Naive thymus-derived CD4-positive, alpha-beta T cell (primary cell): ENCODE measurements at regions of chr4 and their contacts with region 1.

Region 1: GRCh38 chr4:112266821-112267220 is 18.9 kb downstream of the TIFA start:
- DNase-seq: peak in 2 of 9 donors; percentile 11 to 24
- ATAC-seq: peak; percentile 45
- H3K4me3 ChIP-seq: no peak overlapping the region
- H3K4me3 Mint-ChIP-seq: no peak overlapping the region
- H3K27ac ChIP-seq: no peak overlapping the region
- H3K27ac Mint-ChIP-seq: peak overlapping the region in 1 of 9 donors; percentile 22
- H3K4me1 ChIP-seq: no peaks in the 10 kb centered on the region
- H3K4me1 Mint-ChIP-seq: peaks cover 0 to 17% (median 0%) of the 10 kb centered on the region in 7 donors
- H3K27me3 ChIP-seq: no peaks in the 10 kb centered on the region
- H3K27me3 Mint-ChIP-seq: no peaks in the 10 kb centered on the region

Region 2: GRCh38 chr4:110622841-110623717 is 1643.7 kb before region 1 on chr4 and contains the start of gene PITX2:
- CTCF ChIA-PET with region 1: no interaction called
- POLR2A ChIA-PET with region 1: no interaction called
- intact Hi-C with region 1: no loop called
- DNase-seq: no peak
- ATAC-seq: peak; percentile 44
- H3K4me3 ChIP-seq: no peak within 1 kb of the TSS
- H3K4me3 Mint-ChIP-seq: peak within 1 kb of the TSS; percentile 61 to 83 (median 72)
- H3K27ac ChIP-seq: no peak within 1 kb of the TSS
- H3K27ac Mint-ChIP-seq: peak within 1 kb of the TSS in 1 of 9 donors; percentile 85
- H3K4me1 ChIP-seq: peaks cover 0 to 12% of the 10 kb centered on the region in 2 donors
- H3K4me1 Mint-ChIP-seq: peaks cover 13 to 54% (median 39%) of the 10 kb centered on the region in 7 donors
- H3K27me3 ChIP-seq: peaks cover 14 to 48% of the 10 kb centered on the region in 2 donors
- H3K27me3 Mint-ChIP-seq: peaks cover 92 to 99% (median 97%) of the 10 kb centered on the region in 5 donors
- total RNA-seq, gene PITX2: not detected

Region 3: GRCh38 chr4:112219826-112220366 is 46.9 kb before region 1 on chr4:
- CTCF ChIA-PET with region 1: interaction called, 3 read pairs
- POLR2A ChIA-PET with region 1: no interaction called
- intact Hi-C with region 1: loop called in 1 of 2 experiments (anchors 1 kb)
- DNase-seq: no peak
- ATAC-seq: no peak
- H3K4me3 ChIP-seq: no peak overlapping the region
- H3K4me3 Mint-ChIP-seq: no peak overlapping the region
- H3K27ac ChIP-seq: no peak overlapping the region
- H3K27ac Mint-ChIP-seq: no peak overlapping the region
- H3K4me1 ChIP-seq: no peaks in the 10 kb centered on the region
- H3K4me1 Mint-ChIP-seq: peaks cover 0 to 7% (median 0%) of the 10 kb centered on the region in 7 donors
- H3K27me3 ChIP-seq: no peaks in the 10 kb centered on the region
- H3K27me3 Mint-ChIP-seq: no peaks in the 10 kb centered on the region

Region 4: GRCh38 chr4:112436955-112437354 is 170.1 kb after region 1 on chr4:
- CTCF ChIA-PET with region 1: no interaction called
- POLR2A ChIA-PET with region 1: no interaction called
- intact Hi-C with region 1: no loop called
- DNase-seq: no peak
- ATAC-seq: no peak
- H3K4me3 ChIP-seq: no peak overlapping the region
- H3K4me3 Mint-ChIP-seq: no peak overlapping the region
- H3K27ac ChIP-seq: no peak overlapping the region
- H3K27ac Mint-ChIP-seq: no peak overlapping the region
- H3K4me1 ChIP-seq: no peaks in the 10 kb centered on the region
- H3K4me1 Mint-ChIP-seq: no peaks in the 10 kb centered on the region
- H3K27me3 ChIP-seq: no peaks in the 10 kb centered on the region
- H3K27me3 Mint-ChIP-seq: no peaks in the 10 kb centered on the region